Brain microvascular endothelial cell (primary cell): ENCODE measurements at regions of chr1 and their contacts with region 1.

Region 1: DNA sequence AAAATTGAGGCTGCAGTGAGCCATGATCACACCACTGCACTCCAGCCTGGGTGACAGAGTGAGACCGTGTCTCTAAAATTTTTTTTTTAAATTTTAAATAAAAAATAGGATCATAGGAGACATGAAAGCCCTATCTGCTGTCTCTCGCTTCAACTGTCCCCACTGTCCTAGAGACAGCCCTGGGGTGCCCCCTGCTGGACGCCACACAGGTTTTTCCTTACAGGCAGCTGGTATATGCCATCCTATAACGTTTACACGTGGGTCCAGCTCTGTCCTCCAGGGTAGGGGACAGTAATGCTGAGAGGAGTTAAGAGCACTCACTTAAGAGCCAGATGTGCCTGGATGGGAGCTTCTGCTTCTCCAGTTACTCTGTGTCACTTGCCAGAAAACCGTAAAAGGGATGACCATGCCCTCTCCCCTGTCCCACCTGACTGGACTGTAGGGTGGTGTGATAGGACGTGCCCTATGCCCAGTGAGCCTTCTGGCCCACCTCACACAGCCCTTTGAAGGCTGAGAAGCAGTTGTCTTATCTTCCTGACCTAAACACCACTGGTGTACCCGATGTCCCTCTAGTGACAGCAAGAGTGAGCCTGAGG is 8.5 kb downstream of the FBXO2 start:
- DNase-seq: peak; percentile 60
- H3K4me3 ChIP-seq: no peak overlapping the region
- H3K27ac ChIP-seq: no peak overlapping the region
- H3K27me3 ChIP-seq: peaks cover 15% of the 10 kb centered on the region
- CTCF ChIP-seq: peak; percentile 88

Region 2: DNA sequence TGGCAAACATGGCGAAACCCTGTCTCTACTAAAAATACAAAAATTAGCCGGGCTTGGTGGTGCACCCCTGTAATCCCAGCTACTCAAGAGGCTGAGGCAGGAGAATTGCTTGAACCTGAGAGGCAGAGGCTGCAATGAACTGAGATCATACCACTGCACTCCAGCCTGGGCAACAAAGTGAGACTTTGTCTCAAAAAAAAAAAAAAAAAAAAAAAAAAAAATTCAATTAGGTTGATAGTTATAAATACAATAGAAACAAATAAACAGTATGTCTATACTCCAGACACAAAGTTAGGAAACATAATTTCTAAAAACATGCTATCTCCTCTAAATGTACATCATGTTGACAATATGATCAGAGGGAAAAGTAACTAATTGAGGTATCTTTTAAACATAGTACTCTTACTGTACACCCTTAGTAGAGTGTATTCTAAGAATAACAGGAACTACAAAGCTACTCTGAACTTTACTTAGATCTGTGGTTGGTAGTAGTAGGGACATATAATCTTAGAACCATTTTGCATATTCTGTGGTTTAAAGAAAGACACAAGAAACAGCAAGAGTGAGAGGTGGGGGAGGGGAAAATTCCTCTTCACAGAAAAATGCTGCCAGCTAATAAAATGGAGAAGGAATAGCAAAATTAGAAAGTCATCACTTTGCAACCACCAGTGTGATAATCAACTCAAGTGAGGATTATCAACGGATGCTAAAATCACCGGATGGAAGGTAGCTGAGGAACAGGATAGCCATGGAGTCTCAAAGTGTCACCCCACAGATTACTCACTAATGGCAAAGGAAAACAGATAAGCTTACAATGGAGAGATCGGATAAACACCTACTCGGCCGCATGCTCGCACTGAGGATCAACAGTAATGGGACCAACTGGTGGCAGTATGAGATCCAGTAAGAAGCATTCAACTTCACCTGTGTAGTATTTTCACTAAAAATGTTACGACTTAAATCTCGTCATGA is 418.4 kb before region 1 on chr1:
- in situ Hi-C with region 1: loop called (anchors 25 kb)
- DNase-seq: no peak
- H3K4me3 ChIP-seq: no peak overlapping the region
- H3K27ac ChIP-seq: no peak overlapping the region
- H3K27me3 ChIP-seq: no peaks in the 10 kb centered on the region
- CTCF ChIP-seq: no peak